Heart left ventricle (tissue), 16 donors: ENCODE measurements at regions of chr20 and their contacts with region 1.

Region 1: DNA sequence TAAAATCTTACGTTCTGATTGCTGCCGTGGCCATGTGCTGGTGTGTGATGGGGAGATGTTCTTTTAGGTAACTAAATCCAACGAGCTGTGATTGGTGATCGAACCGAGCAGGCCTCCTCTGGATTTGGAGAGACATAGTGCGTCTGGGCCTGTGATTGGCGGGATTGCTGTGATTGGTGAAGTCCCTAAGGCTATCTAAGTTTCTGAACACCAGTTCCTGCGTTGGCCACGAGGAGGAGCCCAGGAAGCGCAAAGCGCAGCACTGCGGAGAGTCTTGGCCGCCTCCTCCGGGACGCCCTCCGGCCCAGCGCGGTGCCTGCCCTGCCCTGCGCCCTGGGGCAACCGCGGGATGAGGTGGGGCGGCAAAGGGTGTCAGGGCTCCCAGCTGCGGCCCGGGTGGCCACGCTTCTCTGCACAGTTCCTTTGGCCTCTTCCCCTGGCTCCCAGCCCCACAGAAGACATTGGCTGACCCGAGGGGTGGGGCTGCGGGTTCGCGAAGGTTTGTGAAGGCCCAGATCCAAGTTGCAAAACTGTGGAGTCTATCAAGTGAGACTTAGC is 33.0 kb downstream of the HNF4A start:
- DNase-seq: peak; percentile 23 to 77 (median 70)
- ATAC-seq: peak; percentile 23 to 82 (median 69)
- H3K4me3 ChIP-seq: no peak overlapping the region
- H3K27ac ChIP-seq: no peak overlapping the region
- H3K4me1 ChIP-seq: peaks cover 0 to 6% (median 0%) of the 10 kb centered on the region in 12 donors
- H3K27me3 ChIP-seq: peaks cover 0 to 11% (median 0%) of the 10 kb centered on the region in 9 donors
- CTCF ChIP-seq: peak; percentile 52 to 73 (median 62)
- POLR2A ChIP-seq: no peak

Region 2: DNA sequence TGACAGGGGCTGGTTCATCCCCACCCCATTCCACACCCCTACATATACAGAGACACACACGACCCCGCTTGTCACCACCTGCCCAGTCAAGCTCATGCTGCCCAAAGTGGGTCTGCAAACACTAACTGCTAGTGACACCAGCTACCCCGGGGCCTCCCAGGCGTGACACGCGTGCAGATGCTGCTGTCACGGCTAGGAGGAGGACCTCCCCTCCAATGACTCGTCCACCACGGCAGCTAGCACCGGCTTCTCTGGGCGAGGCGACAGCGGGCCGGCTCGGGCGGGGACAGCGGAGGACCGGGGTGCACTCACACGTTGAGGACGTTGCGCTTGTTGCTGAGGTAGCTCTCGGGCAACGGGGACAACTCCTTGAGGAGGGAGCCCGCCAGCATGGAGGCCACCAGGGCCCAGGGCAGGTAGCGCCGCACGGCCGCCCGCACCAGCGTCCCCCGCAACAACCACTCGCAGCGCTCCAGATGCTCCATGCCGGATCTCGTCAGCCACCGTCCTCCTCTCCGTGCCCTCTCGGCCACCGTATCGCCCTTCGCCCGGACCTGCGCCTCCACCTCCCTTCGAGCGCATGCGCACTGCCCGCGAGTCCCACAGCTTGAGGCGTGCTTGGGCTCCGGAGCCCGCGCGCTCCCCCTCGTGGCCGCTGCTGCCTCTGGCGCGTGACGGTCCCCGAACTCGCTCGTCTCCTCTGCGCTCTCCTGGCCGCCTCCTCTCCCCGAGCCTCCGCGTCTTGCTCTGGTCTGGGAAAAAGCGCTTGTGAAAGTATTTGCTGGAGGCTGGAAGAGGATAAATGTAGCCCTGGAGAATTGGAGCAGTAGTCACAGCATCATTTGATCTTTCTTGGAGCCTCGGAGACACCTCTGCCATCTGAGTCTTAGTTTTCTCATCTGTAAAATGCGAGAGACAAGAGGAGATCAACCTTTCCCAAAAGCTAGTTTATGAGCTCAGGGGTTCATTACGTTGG is 77.6 kb before region 1 on chr20 and contains the start of gene FITM2:
- intact Hi-C with region 1: loop called in 4 of 10 experiments (anchors 5 to 10 kb)
- DNase-seq: peak; percentile 98 to 100 (median 99)
- ATAC-seq: peak; percentile 72 to 90 (median 88)
- H3K4me3 ChIP-seq: peak within 1 kb of the TSS; percentile 62 to 98 (median 81)
- H3K27ac ChIP-seq: peak within 1 kb of the TSS; percentile 66 to 95 (median 88)
- H3K4me1 ChIP-seq: peaks cover 0 to 47% (median 17%) of the 10 kb centered on the region in 12 donors
- H3K27me3 ChIP-seq: no peaks in the 10 kb centered on the region
- CTCF ChIP-seq: peak; percentile 92 to 98 (median 96)
- POLR2A ChIP-seq: peak in 1 of 2 donors; percentile 80
- total RNA-seq, gene FITM2: 71.7 to 165 (median 125) TPM

Region 3: DNA sequence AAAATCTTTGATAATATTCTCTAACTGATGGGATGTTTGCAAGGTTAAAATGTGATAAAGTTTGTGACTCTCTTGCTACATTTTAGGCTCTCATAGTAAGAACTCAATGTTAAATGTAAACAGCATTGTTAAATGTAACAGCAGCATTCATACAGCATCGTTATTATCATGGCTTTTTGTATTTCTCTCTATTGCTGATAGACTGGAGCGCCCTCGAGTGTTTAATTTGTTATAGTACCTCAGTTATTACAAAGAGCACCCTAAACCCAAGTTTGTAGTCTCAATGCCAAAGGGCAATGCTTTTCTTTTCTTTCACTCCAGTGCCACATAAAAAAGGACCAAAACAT is 72.2 kb after region 1 on chr20:
- intact Hi-C with region 1: loop called in 7 of 10 experiments (anchors 5 to 10 kb)
- DNase-seq: no peak
- ATAC-seq: peak in 2 of 4 donors; percentile 45 to 47
- H3K4me3 ChIP-seq: no peak overlapping the region
- H3K27ac ChIP-seq: no peak overlapping the region
- H3K4me1 ChIP-seq: no peaks in the 10 kb centered on the region
- H3K27me3 ChIP-seq: no peaks in the 10 kb centered on the region
- CTCF ChIP-seq: peak in 10 of 12 donors; percentile 16 to 56 (median 38)
- POLR2A ChIP-seq: no peak

Region 4: DNA sequence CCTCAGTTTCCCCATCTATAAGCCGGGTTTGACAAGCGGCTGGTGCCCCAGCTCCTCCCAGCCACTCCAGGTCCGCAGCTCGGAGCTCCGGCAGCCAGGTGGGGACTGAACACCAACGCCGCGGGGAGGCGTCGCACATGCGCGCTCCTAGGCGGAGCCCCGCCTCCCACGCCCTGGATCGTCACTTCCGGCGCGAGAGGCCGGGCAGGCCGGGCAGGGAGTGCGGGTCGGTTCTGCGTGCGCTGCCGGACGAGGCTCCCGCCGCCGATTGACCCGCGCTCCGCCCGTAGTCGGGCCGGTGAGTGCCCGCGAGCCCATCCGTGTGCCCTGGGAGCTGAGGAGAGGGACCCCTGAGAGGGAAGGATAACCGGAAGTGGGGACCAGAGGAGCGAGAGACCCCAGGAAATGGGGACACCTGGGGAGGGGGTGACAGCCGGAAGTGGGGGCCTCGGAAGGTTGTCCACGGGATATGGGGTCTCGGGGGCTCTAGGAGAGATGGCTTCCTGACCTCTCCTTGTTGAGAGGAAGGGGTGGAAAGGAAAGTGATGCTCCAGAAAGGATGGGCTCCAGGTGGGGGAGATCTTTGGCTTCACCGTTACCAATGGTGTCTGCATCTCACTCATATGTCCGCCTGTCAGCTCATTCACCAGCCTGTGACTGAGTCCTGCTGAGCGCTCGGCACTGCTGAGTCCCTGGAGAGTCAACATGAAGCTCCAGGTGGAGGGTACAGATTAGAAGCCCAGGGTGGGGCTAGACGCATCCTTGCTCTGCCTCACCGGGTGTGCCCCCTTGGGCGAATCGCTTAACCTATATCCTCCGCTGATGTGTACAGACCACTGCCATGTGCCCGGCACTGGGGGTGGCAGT is 87.4 kb after region 1 on chr20 and contains the start of gene TTPAL:
- intact Hi-C with region 1: loop called in 3 of 10 experiments (anchors 5 kb)
- DNase-seq: peak; percentile 88 to 94 (median 91)
- ATAC-seq: peak; percentile 93 to 98 (median 98)
- H3K4me3 ChIP-seq: peak within 1 kb of the TSS; percentile 60 to 90 (median 76)
- H3K27ac ChIP-seq: peak within 1 kb of the TSS; percentile 58 to 97 (median 90)
- H3K4me1 ChIP-seq: peaks cover 0 to 20% (median 11%) of the 10 kb centered on the region in 12 donors
- H3K27me3 ChIP-seq: no peaks in the 10 kb centered on the region
- CTCF ChIP-seq: peak in 10 of 12 donors; percentile 17 to 62 (median 40)
- POLR2A ChIP-seq: peak; percentile 88 to 98
- total RNA-seq, gene TTPAL: 2.8 to 6.0 (median 4.2) TPM

Region 5: DNA sequence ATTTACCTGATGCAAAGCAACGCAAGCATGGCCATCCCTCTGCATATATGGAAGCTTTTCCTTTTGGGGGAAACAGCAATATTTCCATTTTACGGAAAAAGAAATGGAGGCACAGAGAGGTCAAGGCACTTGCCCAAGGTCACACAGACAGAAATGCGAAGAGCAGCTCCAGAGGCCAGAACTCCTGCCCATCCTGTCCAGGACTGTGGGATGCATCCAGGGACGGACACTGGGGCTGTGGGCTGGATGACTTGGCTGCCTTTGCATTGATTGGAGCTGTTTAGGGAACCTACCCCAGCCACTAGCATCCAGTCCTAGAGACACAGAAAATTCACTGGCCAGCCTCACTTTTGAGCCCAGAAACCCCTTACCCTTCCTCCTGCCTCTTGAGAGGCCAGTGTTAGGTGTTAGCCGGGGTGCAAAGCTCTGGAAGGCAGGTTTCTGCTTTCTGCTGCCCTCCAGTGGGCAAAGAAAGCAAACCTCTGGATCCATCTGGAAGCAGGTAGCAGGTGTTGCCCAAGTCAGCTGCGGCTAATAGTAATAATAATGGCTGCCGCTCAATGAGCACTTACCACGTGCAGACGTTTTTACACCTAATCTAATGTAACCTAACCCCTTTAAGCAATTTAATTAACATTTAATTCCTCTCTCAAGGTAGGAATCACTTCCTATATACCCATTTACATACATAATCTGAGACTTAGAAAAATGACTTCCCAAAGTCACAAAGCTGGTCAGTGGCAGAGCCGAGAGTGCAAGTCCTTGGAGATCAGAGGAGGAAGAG is 294.9 kb after region 1 on chr20:
- intact Hi-C with region 1: loop called in 7 of 10 experiments (anchors 2 to 10 kb)
- DNase-seq: no peak
- ATAC-seq: peak in 3 of 4 donors; percentile 50 to 70 (median 59)
- H3K4me3 ChIP-seq: no peak overlapping the region
- H3K27ac ChIP-seq: no peak overlapping the region
- H3K4me1 ChIP-seq: peaks cover 0 to 12% (median 0%) of the 10 kb centered on the region in 12 donors
- H3K27me3 ChIP-seq: no peaks in the 10 kb centered on the region
- CTCF ChIP-seq: peak in 11 of 12 donors; percentile 35 to 77 (median 57)
- POLR2A ChIP-seq: no peak

Region 6: GRCh38 chr20:44861531-44862006 is 473.0 kb after region 1 on chr20:
- intact Hi-C with region 1: loop called in 2 of 10 experiments (anchors 10 kb)
- DNase-seq: peak in 2 of 5 donors; percentile 32 to 48
- ATAC-seq: peak; percentile 42 to 91 (median 70)
- H3K4me3 ChIP-seq: no peak overlapping the region
- H3K27ac ChIP-seq: no peak overlapping the region
- H3K4me1 ChIP-seq: peaks cover 0 to 27% (median 6%) of the 10 kb centered on the region in 12 donors
- H3K27me3 ChIP-seq: no peaks in the 10 kb centered on the region
- CTCF ChIP-seq: no peak
- POLR2A ChIP-seq: no peak